ENCODE measurements at regions of chr12 and their contacts with region 1.

Region 1: GRCh38 chr12:70590051-70590450 is 47.2 kb downstream of the PTPRB start:
- ATAC-seq: peak in 4 of 8 experiments; percentile 61 to 92 (median 86)
- H3K4me3 ChIP-seq: no peak overlapping the region
- H3K27ac ChIP-seq: no peak overlapping the region
- H3K4me1 ChIP-seq: no peaks in the 10 kb centered on the region

Region 2: DNA sequence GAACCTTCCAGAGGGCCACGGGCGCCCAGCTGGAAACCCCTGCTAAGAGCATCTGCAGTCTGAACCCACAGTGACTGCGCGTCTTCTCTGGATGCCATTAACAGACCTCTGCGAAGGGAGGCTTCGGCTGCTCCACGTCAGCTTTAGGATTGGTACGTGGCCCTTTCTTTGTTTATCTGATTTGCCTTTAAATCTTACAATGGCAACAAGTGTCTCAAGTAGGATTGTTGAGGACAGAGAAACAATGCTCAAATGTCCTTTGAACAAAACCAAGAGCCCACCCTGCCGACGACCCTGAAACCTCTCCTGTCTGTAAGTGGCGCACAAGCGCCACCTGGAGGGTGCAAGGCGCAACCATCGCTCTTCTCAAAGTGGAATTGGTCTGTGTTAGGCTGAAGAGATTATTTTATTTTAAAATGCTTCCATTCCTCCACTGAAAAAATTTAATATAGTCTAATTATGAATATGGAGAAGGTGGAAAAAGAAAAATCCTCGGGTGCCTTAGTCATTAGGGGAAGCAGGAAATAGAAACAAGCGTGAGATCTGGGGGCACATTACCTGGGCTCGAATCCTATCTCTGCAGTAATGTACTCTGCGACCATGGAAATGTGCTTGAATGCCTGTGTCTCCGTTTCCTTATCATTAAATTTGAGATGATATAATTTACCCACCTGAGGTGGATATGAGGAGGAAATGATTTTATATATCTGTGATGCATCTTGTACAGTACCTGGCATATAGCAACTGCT is 129.8 kb after region 1 on chr12:
- in situ Hi-C with region 1: loop called in 3 of 9 experiments (anchors 10 kb)
- ATAC-seq: peak; percentile 32 to 92 (median 80)
- H3K4me3 ChIP-seq: peak overlapping the region in 2 of 5 donors; percentile 15 to 16
- H3K27ac ChIP-seq: no peak overlapping the region
- H3K4me1 ChIP-seq: no peaks in the 10 kb centered on the region

Region 3: DNA sequence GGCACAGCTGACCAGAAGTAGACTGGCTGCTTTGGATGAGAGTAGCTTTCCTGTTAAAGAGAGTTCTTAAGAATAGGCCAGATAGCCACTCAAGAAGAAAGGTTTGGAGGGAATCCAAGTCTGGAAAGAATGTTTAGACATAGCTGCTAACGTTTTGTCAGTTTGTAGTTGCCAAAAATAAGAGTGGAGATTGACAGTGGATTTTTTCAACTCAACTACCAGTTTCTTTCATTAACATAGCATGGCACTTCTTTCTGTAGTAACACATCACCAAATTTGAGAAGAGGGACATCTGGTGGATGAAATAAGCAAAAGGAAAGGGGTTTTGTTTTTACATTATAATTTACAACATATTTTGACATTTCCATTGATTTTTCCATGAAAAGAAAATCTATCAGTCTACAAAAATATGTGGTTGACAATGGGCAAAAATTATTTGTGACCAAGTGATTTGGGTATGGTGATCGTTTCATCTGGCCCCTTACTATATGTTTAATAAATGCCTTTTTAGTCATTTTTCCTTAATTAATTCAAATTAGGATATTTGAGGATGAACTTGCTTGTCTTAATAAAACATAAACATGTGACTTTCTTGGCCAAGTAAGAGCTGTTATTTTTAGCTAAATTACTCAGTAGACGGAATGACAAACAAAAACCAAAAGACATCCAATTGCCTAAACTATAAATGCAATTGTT is 259.4 kb after region 1 on chr12:
- in situ Hi-C with region 1: loop called in 1 of 9 experiments (anchors 25 kb)
- ATAC-seq: peak in 3 of 8 experiments; percentile 55 to 62 (median 55)
- H3K4me3 ChIP-seq: no peak overlapping the region
- H3K27ac ChIP-seq: no peak overlapping the region
- H3K4me1 ChIP-seq: no peaks in the 10 kb centered on the region

Region 4: GRCh38 chr12:71014180-71014785 is 424.2 kb after region 1 on chr12:
- in situ Hi-C with region 1: loop called in 1 of 9 experiments (anchors 25 kb)
- ATAC-seq: peak in 5 of 8 experiments; percentile 30 to 76 (median 62)
- H3K4me3 ChIP-seq: no peak overlapping the region
- H3K27ac ChIP-seq: no peak overlapping the region
- H3K4me1 ChIP-seq: no peaks in the 10 kb centered on the region

Measured in motor neuron (in vitro differentiated cells).